ENCODE measurements at regions of chr6 and their contacts with region 1.

Region 1: GRCh38 chr6:160930547-160931377 is 60.8 kb upstream of the MAP3K4 start:
- DNase-seq: peak; percentile 77
- ATAC-seq: peak; percentile 76
- H3K4me3 Mint-ChIP-seq: peak overlapping the region; percentile 77
- H3K27ac Mint-ChIP-seq: no peak overlapping the region
- H3K4me1 Mint-ChIP-seq: peaks cover 16% of the 10 kb centered on the region
- H3K27me3 Mint-ChIP-seq: peaks cover 11% of the 10 kb centered on the region
- CTCF ChIP-seq: peak; percentile 92

Region 2: DNA sequence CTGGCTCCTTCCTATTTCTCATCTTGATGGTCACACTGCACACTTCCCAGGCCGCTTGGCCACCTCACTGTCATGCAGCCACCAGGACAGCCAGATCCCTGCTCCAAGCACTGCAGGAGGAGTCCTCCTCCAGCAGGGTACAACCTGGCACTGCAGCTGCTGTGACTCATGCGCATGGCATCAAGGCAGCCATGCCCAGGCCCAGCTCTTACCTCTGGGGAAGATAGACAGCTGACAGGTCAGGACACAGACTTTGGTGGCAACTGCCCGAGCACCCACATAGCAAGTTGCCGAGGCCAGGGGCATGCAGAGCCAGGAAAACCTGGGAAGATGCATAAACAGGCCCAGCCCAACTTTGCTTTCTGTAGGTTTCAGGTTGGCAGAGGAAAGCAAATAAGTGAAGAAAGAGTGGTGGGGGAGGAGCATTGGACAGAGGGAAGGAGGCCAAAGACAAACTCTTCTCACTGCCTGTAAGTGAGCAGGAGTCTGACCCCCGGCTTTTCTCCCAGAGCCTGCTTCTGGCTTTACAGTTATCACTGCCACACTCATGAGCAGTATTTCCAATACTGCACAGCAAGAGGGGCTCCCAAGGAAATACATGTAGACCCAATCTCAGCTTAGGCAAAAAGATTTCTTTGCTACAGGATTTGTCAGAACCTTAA is 543.8 kb before region 1 on chr6:
- CTCF ChIA-PET with region 1: no interaction called
- POLR2A ChIA-PET with region 1: no interaction called
- DNase-seq: no peak
- ATAC-seq: peak; percentile 39; the same call in 1 of the 2 replicates
- H3K4me3 Mint-ChIP-seq: no peak overlapping the region
- H3K27ac Mint-ChIP-seq: no peak overlapping the region
- H3K4me1 Mint-ChIP-seq: peaks cover 3% of the 10 kb centered on the region; the same call in 1 of the 2 replicates
- H3K27me3 Mint-ChIP-seq: no peaks in the 10 kb centered on the region; the same call in 1 of the 2 replicates
- CTCF ChIP-seq: no peak

Region 3: DNA sequence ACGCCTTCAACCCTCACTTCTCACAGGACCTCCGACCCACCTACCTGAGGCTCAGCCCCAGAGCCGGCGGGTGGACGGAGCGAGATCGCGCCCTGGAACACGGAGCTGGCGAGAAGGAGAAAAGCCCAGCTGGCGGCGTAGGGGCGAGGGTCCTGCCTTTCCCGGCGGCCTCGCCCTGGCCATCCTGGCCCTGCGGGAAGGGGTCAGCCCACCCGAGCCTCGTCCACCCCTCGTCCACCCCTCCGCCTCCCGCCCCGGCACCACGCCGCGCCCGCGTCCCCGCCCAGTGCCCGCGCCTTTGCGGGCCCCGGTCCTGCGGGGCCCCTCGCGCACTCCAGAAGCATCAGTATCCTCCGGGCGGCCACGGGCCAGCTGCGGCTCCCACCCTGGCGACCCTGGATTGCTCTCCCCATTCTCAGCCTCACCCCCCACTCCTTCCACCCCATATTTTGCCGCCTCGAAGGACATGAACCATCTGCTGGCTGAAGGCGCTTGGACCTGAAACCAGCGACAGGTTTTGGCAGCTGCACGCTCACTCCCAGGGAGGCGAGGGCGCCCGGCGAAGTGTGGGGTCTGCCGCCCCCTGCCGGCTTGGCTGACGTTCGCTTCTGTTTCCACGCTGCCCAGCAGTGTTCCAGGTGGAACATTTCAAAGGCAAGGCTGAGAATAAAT is 163.6 kb before region 1 on chr6:
- CTCF ChIA-PET with region 1: interaction called, 11 read pairs
- POLR2A ChIA-PET with region 1: no interaction called
- DNase-seq: peak; percentile 81
- ATAC-seq: peak; percentile 87
- H3K4me3 Mint-ChIP-seq: peak overlapping the region; percentile 84
- H3K27ac Mint-ChIP-seq: no peak overlapping the region
- H3K4me1 Mint-ChIP-seq: peaks cover 8% of the 10 kb centered on the region
- H3K27me3 Mint-ChIP-seq: peaks cover 21% of the 10 kb centered on the region
- CTCF ChIP-seq: peak; percentile 65

Region 4: GRCh38 chr6:160837146-160837545 is 93.6 kb before region 1 on chr6:
- CTCF ChIA-PET with region 1: interaction called, 22 read pairs
- POLR2A ChIA-PET with region 1: no interaction called
- DNase-seq: no peak
- ATAC-seq: peak; percentile 61
- H3K4me3 Mint-ChIP-seq: no peak overlapping the region
- H3K27ac Mint-ChIP-seq: no peak overlapping the region
- H3K4me1 Mint-ChIP-seq: no peaks in the 10 kb centered on the region
- H3K27me3 Mint-ChIP-seq: no peaks in the 10 kb centered on the region
- CTCF ChIP-seq: no peak

Region 5: DNA sequence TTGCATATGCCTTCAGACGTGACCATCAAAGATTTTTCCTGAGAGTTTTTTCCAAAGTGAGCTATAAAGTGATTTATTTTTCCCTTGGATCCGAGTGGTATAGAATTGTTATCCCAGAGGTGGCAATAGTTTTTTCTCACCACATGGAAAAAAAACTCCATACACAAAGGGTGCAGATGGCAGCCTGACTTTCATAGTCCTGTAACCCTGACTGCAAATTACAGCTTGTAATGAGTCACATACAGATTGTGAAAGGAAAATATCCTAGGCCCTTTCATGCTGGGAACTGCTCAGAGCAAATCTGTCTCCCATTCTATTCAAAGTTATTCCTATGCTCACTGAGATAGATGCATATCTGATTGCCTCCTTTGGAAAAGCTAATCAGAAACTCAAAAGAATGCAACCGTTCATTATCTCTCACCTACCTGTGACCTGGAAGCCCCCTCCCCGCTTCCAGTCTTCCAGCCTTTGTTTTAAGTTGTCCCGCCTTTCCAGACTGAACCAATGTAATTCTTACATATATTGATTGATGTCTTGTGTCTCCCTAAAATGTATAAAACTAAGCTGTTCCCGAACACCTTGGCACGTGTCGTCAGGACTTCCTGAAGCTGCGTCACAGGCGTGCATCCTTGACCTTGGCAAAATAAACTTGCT is 47.9 kb before region 1 on chr6:
- CTCF ChIA-PET with region 1: interaction called, 13 read pairs
- POLR2A ChIA-PET with region 1: no interaction called
- DNase-seq: no peak
- ATAC-seq: peak; percentile 22
- H3K4me3 Mint-ChIP-seq: peak overlapping the region; percentile 41
- H3K27ac Mint-ChIP-seq: peak overlapping the region; percentile 70
- H3K4me1 Mint-ChIP-seq: peaks cover 63% of the 10 kb centered on the region
- H3K27me3 Mint-ChIP-seq: no peaks in the 10 kb centered on the region
- CTCF ChIP-seq: no peak

Region 6: GRCh38 chr6:160960839-160961238 is 30.1 kb after region 1 on chr6:
- CTCF ChIA-PET with region 1: interaction called, 11 read pairs
- POLR2A ChIA-PET with region 1: no interaction called
- DNase-seq: no peak
- ATAC-seq: no peak
- H3K4me3 Mint-ChIP-seq: no peak overlapping the region
- H3K27ac Mint-ChIP-seq: no peak overlapping the region
- H3K4me1 Mint-ChIP-seq: peaks cover 11% of the 10 kb centered on the region
- H3K27me3 Mint-ChIP-seq: no peaks in the 10 kb centered on the region
- CTCF ChIP-seq: no peak

Region 7: GRCh38 chr6:160992061-160992979 is 61.6 kb after region 1 on chr6:
- CTCF ChIA-PET with region 1: interaction called, 38 read pairs
- POLR2A ChIA-PET with region 1: no interaction called
- DNase-seq: peak; percentile 45
- ATAC-seq: peak; percentile 61
- H3K4me3 Mint-ChIP-seq: peak overlapping the region; percentile 97
- H3K27ac Mint-ChIP-seq: peak overlapping the region; percentile 97
- H3K4me1 Mint-ChIP-seq: peaks cover 25% of the 10 kb centered on the region
- H3K27me3 Mint-ChIP-seq: peaks cover 1% of the 10 kb centered on the region; the same call in 1 of the 2 replicates
- CTCF ChIP-seq: peak; percentile 9; the same call in 1 of the 2 replicates

Region 8: DNA sequence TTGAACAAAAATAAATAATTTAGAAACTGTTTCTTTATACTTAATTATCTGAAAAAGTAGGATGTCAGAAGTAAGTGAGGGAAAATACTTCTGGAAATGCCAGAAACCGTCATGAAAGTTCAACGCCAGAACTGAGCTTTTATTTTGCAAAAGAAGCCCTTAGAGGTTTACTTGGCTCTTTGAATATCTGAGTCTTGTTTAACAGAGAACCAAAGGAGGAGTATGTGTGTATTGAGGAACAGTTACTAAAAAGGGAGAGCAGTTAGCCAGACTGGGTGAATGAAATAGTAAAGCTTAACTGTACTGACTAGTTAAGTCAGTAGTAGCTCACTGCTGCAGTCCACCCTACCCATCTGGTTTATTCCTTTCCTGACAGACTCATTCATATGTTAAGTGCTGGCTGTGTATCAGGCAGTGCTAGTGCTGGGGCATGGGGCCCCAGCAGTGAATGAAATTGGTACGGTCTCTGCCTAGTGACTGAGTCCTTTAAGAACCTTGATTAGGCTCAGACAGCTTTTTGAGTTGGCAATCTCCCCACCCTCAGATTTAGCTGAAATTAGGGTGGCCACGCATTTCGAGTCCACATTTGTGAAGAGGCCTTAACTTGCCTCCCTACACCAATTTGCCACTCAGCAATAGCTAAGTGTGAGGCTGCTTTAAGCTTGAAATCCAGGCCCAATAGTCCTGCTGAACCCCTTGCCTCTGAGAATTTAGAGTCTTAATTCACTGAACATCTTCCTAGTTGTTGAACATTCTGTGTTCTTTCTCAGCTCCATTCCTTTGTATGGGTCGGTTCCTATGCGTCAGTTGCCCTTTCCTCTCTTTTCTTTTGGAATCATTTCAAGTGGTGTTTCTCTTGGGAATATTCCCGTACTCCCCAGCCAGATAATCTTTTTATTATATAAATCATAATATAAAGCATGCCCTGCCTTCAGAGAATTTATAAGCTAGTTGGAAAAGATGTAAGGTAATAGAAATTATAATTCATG is 81.0 kb after region 1 on chr6:
- CTCF ChIA-PET with region 1: interaction called, 11 read pairs
- POLR2A ChIA-PET with region 1: no interaction called
- DNase-seq: peak; percentile 38
- ATAC-seq: peak; percentile 98
- H3K4me3 Mint-ChIP-seq: peak overlapping the region; percentile 66
- H3K27ac Mint-ChIP-seq: peak overlapping the region; percentile 99
- H3K4me1 Mint-ChIP-seq: peaks cover 77% of the 10 kb centered on the region
- H3K27me3 Mint-ChIP-seq: no peaks in the 10 kb centered on the region
- CTCF ChIP-seq: no peak